ENCODE measurements at regions of chr5 and their contacts with region 1.

Region 1: GRCh38 chr5:32223946-32224608 is 50.0 kb upstream of the GOLPH3 start:
- DNase-seq: no peak
- H3K4me3 ChIP-seq: no peak overlapping the region
- H3K27ac ChIP-seq: peak overlapping the region; percentile 62 to 79 (median 78)
- H3K4me1 ChIP-seq: peaks cover 0 to 10% (median 0%) of the 10 kb centered on the region in 4 donors
- H3K27me3 ChIP-seq: no peaks in the 10 kb centered on the region
- CTCF ChIP-seq: no peak
- EP300 ChIP-seq: no peak
- POLR2A ChIP-seq: no peak

Region 2: GRCh38 chr5:32055891-32056866 is 167.9 kb before region 1 on chr5:
- in situ Hi-C with region 1: no loop called
- intact Hi-C with region 1: no loop called
- DNase-seq: no peak
- H3K4me3 ChIP-seq: no peak overlapping the region
- H3K27ac ChIP-seq: no peak overlapping the region
- H3K4me1 ChIP-seq: no peaks in the 10 kb centered on the region
- H3K27me3 ChIP-seq: no peaks in the 10 kb centered on the region
- CTCF ChIP-seq: no peak
- EP300 ChIP-seq: no peak
- POLR2A ChIP-seq: no peak

Region 3: GRCh38 chr5:32174011-32174870 is 49.8 kb before region 1 on chr5 and contains the start of gene GOLPH3:
- in situ Hi-C with region 1: no loop called
- intact Hi-C with region 1: loop called (anchors 5 kb)
- DNase-seq: peak; percentile 95
- H3K4me3 ChIP-seq: peak within 1 kb of the TSS; percentile 79 to 97 (median 90)
- H3K27ac ChIP-seq: peak within 1 kb of the TSS; percentile 99 to 100 (median 100)
- H3K4me1 ChIP-seq: peaks cover 6 to 39% (median 31%) of the 10 kb centered on the region in 4 donors
- H3K27me3 ChIP-seq: no peaks in the 10 kb centered on the region
- CTCF ChIP-seq: peak in 3 of 5 experiments; percentile 8 to 31 (median 26)
- EP300 ChIP-seq: no peak
- POLR2A ChIP-seq: peak; percentile 95
- total RNA-seq, gene GOLPH3: 52.1 to 666 (median 132) TPM

Region 4: GRCh38 chr5:32339198-32339597 is 115.1 kb after region 1 on chr5:
- in situ Hi-C with region 1: loop called in 2 of 4 experiments (anchors 10 to 25 kb)
- intact Hi-C with region 1: no loop called
- DNase-seq: no peak
- H3K4me3 ChIP-seq: no peak overlapping the region
- H3K27ac ChIP-seq: no peak overlapping the region
- H3K4me1 ChIP-seq: no peaks in the 10 kb centered on the region
- H3K27me3 ChIP-seq: no peaks in the 10 kb centered on the region
- CTCF ChIP-seq: no peak
- EP300 ChIP-seq: no peak
- POLR2A ChIP-seq: no peak

Region 5: GRCh38 chr5:32566319-32567111 is 342.4 kb after region 1 on chr5:
- in situ Hi-C with region 1: no loop called
- intact Hi-C with region 1: no loop called
- DNase-seq: no peak
- H3K4me3 ChIP-seq: no peak overlapping the region
- H3K27ac ChIP-seq: no peak overlapping the region
- H3K4me1 ChIP-seq: peaks cover 0 to 9% (median 2%) of the 10 kb centered on the region in 4 donors
- H3K27me3 ChIP-seq: no peaks in the 10 kb centered on the region
- CTCF ChIP-seq: no peak
- EP300 ChIP-seq: no peak
- POLR2A ChIP-seq: no peak